CD8-positive, alpha-beta T cell (primary cell): ENCODE measurements at regions of chr1 and their contacts with region 1.

Region 1: DNA sequence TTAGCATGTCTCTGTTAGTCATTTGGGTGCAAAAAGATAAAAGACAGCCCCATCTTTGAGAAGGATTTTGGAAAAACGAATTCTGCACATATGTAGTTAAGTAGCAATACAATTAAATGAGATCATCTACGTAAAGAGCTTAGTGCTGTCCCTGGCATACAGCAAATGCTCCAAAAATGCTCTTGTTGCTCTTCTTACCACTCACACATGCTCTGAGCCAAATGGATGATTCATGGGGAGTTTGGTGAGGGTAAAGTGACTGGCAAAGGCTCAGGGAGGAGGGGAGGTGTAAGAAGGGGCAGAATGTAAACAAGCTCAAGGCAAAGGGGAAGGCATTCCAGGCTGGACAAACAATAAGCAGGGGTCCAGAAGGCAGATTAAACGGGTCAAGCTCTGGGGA is 191.9 kb downstream of the AK5 start:
- DNase-seq: no peak
- ATAC-seq: no peak
- H3K4me3 ChIP-seq: no peak overlapping the region
- H3K4me3 Mint-ChIP-seq: no peak overlapping the region
- H3K27ac ChIP-seq: no peak overlapping the region
- H3K27ac Mint-ChIP-seq: no peak overlapping the region
- H3K4me1 ChIP-seq: no peaks in the 10 kb centered on the region
- H3K4me1 Mint-ChIP-seq: peaks cover 15% of the 10 kb centered on the region
- H3K27me3 ChIP-seq: no peaks in the 10 kb centered on the region
- H3K27me3 Mint-ChIP-seq: no peaks in the 10 kb centered on the region
- CTCF ChIP-seq: no peak

Region 2: GRCh38 chr1:77416692-77417450 is 56.8 kb before region 1 on chr1:
- CTCF ChIA-PET with region 1: no interaction called
- POLR2A ChIA-PET with region 1: no interaction called
- intact Hi-C with region 1: loop called in 1 of 2 experiments (anchors 10 kb)
- DNase-seq: no peak
- ATAC-seq: no peak
- H3K4me3 ChIP-seq: no peak overlapping the region
- H3K4me3 Mint-ChIP-seq: no peak overlapping the region
- H3K27ac ChIP-seq: no peak overlapping the region
- H3K27ac Mint-ChIP-seq: no peak overlapping the region
- H3K4me1 ChIP-seq: peaks cover 28% of the 10 kb centered on the region
- H3K4me1 Mint-ChIP-seq: peaks cover 44% of the 10 kb centered on the region
- H3K27me3 ChIP-seq: no peaks in the 10 kb centered on the region
- H3K27me3 Mint-ChIP-seq: peaks cover 2% of the 10 kb centered on the region
- CTCF ChIP-seq: no peak